CD4-positive, alpha-beta memory T cell (primary cell): ENCODE measurements at regions of chr6 and their contacts with region 1.

Region 1: DNA sequence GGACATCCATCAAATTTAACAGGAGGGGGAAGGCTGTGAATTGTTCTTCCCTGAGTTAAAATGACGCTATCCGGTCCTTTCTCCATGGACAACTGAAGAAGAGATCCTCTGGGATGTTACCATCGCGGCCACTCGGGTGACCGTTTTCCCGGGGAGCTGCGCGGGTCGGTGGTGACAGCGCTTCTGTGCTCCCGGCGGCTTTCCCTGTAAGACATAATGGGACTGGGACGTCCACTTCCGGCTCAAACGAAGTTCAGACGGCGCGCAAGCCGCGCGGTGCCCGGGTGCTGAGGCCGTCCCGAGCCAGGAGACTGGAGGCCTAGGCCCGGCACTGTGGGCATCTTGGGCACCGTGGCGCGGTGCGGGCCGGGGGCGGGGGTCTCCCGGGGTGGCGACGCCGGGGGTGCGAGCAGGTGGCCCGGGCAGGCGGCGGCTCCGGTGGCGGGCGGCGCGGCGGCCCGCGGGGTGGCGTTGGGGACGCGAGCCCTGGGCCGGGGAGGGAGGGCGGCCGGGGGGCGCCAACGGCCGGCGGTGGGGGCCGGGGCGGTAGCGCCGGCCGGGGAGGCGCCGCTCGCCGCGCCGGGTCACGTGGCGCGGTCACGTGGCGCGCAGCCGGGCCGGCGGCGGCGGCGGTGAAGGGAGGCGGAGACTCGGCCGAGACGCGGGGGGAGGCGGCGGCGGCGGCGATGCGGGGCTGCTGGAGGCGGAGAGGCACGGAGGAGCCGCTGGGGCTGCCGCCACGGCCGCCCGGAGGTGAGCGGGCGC is 63.6 kb downstream of the GTF2H5 start:
- DNase-seq: peak; percentile 70 to 77 (median 75)
- H3K4me3 ChIP-seq: peak overlapping the region; percentile 32 to 66
- H3K4me3 Mint-ChIP-seq: peak overlapping the region; percentile 86 to 93 (median 91)
- H3K27ac ChIP-seq: peak overlapping the region; percentile 52
- H3K27ac Mint-ChIP-seq: peak overlapping the region; percentile 84 to 97 (median 94)
- H3K4me1 ChIP-seq: peaks cover 28% of the 10 kb centered on the region
- H3K4me1 Mint-ChIP-seq: peaks cover 29 to 45% (median 35%) of the 10 kb centered on the region in 4 donors
- H3K27me3 ChIP-seq: no peaks in the 10 kb centered on the region
- H3K27me3 Mint-ChIP-seq: no peaks in the 10 kb centered on the region

Region 2: GRCh38 chr6:156795825-156796224 is 1435.9 kb before region 1 on chr6:
- CTCF ChIA-PET with region 1: no interaction called
- POLR2A ChIA-PET with region 1: no interaction called
- intact Hi-C with region 1: no loop called
- DNase-seq: no peak
- H3K4me3 ChIP-seq: no peak overlapping the region
- H3K4me3 Mint-ChIP-seq: peak overlapping the region in 7 of 8 donors; percentile 15 to 74 (median 67)
- H3K27ac ChIP-seq: no peak overlapping the region
- H3K27ac Mint-ChIP-seq: peak overlapping the region in 6 of 7 donors; percentile 42 to 79 (median 72)
- H3K4me1 ChIP-seq: peaks cover 76% of the 10 kb centered on the region
- H3K4me1 Mint-ChIP-seq: peaks cover 68 to 91% (median 80%) of the 10 kb centered on the region in 4 donors
- H3K27me3 ChIP-seq: no peaks in the 10 kb centered on the region
- H3K27me3 Mint-ChIP-seq: no peaks in the 10 kb centered on the region

Region 3: DNA sequence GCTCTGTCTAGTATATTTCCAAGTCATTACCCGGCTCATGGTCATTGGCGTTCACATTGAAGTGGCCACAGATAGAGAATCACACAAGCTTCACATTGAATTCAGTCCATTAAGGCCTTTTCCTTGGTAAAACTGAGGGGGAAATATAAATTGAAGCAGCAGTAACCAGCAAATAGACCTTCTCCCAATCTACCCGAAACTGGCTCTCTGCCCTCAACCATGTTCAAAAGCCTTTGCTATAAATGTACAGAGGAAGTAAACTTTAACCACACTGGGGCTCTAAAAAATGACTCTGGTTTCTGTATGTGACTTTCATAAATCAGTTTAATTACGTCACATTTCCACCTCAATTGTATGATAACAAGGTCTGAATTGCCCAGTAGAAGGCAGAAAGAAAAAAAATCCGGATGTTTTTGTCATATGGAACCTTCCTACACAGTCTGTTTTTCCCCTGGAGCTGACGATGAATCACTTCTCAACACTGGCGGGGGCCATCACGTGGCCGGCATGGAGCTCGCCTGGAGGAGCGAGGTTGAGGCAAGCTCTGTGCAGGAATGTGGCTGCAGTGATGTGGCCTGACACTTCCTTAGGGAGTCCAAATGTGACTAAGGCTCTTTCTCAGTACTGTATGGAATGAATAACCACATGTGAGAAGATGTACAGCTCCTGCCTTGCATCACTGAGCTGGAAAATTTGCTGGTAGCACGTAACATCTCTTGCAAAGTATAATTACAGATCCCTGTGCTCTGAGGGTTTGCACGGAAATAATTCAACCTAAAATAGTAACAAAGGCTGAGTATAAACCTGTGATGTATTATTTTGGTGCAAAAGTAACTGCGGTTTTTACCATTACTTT is 467.3 kb before region 1 on chr6:
- CTCF ChIA-PET with region 1: no interaction called
- POLR2A ChIA-PET with region 1: no interaction called
- intact Hi-C with region 1: no loop called
- DNase-seq: peak; percentile 86 to 96 (median 91)
- H3K4me3 ChIP-seq: peak overlapping the region; percentile 0 to 49
- H3K4me3 Mint-ChIP-seq: peak overlapping the region; percentile 79 to 88 (median 82)
- H3K27ac ChIP-seq: peak overlapping the region; percentile 49
- H3K27ac Mint-ChIP-seq: peak overlapping the region; percentile 94 to 98 (median 95)
- H3K4me1 ChIP-seq: peaks cover 65% of the 10 kb centered on the region
- H3K4me1 Mint-ChIP-seq: peaks cover 50 to 72% (median 58%) of the 10 kb centered on the region in 4 donors
- H3K27me3 ChIP-seq: no peaks in the 10 kb centered on the region
- H3K27me3 Mint-ChIP-seq: peaks cover 2 to 4% of the 10 kb centered on the region in 2 donors

Region 4: GRCh38 chr6:158290659-158291058 is 58.9 kb after region 1 on chr6:
- CTCF ChIA-PET with region 1: no interaction called
- POLR2A ChIA-PET with region 1: interaction called, 5 read pairs
- intact Hi-C with region 1: loop called (anchors 2 kb)
- DNase-seq: peak; percentile 56 to 71 (median 66)
- H3K4me3 ChIP-seq: peak overlapping the region; percentile 23 to 46
- H3K4me3 Mint-ChIP-seq: peak overlapping the region; percentile 75 to 92 (median 86)
- H3K27ac ChIP-seq: peak overlapping the region; percentile 41
- H3K27ac Mint-ChIP-seq: peak overlapping the region; percentile 87 to 96 (median 95)
- H3K4me1 ChIP-seq: peaks cover 45% of the 10 kb centered on the region
- H3K4me1 Mint-ChIP-seq: peaks cover 36 to 54% (median 43%) of the 10 kb centered on the region in 4 donors
- H3K27me3 ChIP-seq: no peaks in the 10 kb centered on the region
- H3K27me3 Mint-ChIP-seq: no peaks in the 10 kb centered on the region

Region 5: GRCh38 chr6:158387036-158387435 is 155.3 kb after region 1 on chr6:
- CTCF ChIA-PET with region 1: no interaction called
- POLR2A ChIA-PET with region 1: no interaction called
- intact Hi-C with region 1: no loop called
- DNase-seq: peak in 4 of 5 donors; percentile 3 to 30 (median 8)
- H3K4me3 ChIP-seq: no peak overlapping the region
- H3K4me3 Mint-ChIP-seq: no peak overlapping the region
- H3K27ac ChIP-seq: no peak overlapping the region
- H3K27ac Mint-ChIP-seq: no peak overlapping the region
- H3K4me1 ChIP-seq: no peaks in the 10 kb centered on the region
- H3K4me1 Mint-ChIP-seq: peaks cover 0 to 12% (median 6%) of the 10 kb centered on the region in 4 donors
- H3K27me3 ChIP-seq: no peaks in the 10 kb centered on the region
- H3K27me3 Mint-ChIP-seq: no peaks in the 10 kb centered on the region